BJ (cell line): ENCODE measurements at regions of chr3 and their contacts with region 1.

Region 1: DNA sequence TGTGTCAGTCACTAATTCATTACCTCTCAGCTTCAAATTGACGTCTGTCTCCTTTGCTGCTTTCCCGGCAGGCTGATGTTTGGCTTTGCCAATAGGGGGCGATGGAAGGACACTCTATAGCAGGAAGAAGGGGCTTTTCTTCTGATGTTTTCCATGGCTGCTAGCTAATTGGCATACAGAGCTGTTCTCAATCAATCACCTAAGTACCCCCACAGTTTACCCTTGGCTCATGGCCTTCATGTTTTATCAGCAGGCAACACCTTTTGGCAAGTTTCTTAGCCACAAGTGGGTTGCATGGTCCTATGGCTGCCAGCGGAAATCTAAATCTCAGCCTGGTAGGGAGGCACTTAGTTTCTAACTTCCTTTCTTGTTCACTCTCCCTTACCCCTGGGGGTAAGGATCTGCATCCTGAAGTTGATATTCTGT is 45.0 kb downstream of the ESYT3 start:
- DNase-seq: no peak
- H3K4me3 ChIP-seq: no peak overlapping the region
- H3K27me3 ChIP-seq: no peaks in the 10 kb centered on the region
- CTCF ChIP-seq: peak; percentile 91

Region 2: DNA sequence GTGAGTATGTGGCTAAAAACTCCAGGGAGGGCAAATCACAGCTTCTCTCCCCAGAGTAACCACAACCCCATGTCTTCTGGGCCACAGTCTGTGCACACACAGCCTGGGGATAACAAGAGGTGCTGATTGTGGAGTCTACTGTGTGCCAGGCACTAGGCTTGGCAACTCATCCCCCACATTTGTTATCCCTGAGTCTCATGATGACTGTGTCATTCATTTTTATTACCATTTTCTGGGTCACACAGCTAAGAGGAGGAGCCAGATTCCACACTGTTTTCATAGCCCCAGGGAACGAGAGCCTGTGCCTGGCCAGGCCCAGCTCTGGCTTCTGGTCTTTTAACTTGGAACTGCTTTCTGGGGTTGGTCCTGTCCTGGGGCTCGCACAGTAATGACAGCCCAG is 10.6 kb before region 1 on chr3:
- CTCF ChIA-PET with region 1: interaction called, 42 read pairs
- POLR2A ChIA-PET with region 1: no interaction called
- DNase-seq: peak; percentile 51
- H3K4me3 ChIP-seq: no peak overlapping the region
- H3K27me3 ChIP-seq: no peaks in the 10 kb centered on the region
- CTCF ChIP-seq: no peak

Region 3: DNA sequence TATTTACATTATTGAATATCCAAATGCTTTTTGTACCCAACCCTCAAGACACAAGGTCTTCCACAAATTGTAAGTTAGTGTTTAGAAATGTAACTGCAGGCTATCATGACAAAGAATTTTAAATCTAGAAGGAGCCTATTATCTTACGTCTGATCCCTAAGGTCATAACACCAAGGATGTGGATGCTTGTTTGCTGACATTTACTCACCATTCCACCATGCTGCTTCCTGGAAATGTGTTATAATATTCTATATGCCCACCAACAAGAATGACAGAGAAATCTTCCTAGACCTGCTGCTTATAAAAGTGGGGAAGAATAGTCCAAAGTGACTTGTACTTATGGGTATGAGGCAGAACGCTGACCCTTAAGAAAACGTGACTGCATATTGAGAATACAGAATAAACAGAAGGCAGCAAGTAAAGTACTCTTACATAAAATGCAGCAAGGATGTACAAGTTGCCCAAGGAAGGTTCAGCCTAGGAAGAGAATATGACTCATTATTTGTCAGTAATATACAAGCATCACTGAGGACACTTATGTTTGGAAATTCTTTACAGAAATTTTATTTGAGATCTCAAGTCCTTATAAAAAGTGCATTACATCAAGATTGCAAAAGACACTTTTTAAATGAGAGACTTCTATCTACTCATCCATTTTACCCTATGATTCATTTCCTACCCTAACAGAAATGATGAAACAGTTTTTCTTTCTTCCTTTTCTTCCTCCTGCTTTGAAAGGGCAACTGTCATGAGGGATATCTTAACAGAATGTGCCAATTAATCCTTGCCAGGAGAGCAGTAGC is 14.6 kb after region 1 on chr3:
- CTCF ChIA-PET with region 1: interaction called, 15 read pairs
- POLR2A ChIA-PET with region 1: no interaction called
- DNase-seq: peak; percentile 83
- H3K4me3 ChIP-seq: no peak overlapping the region
- H3K27me3 ChIP-seq: no peaks in the 10 kb centered on the region
- CTCF ChIP-seq: no peak

Region 4: DNA sequence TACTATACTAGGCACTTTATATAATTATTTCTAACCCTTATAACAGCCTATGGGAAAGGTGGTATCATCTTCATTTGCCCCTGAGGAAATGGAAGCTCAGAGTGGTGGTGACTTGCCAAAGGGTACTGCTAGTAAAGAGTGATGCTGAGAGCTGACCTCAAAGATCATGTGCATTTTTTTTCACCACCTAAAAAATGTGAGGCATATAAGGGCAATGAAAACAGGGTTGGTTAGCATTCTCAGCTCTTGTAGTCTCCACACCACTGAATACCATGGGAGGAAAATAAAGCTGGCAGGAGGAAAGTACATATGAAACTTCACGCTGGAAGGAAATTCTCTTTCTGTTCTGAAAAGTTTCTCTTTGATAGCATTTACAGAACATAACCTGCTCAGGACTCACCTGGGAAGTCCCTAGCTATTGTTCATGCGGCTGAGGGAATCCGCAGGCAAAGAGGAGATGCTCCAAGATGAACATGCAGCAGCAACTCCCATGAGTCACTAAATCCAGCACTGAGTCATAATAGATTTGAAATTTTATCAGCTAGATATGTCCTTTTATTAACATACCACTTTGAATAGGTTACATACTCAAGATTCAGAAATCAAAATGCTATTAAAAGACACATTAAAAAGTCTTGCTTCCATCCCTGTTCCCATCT is 146.4 kb after region 1 on chr3:
- CTCF ChIA-PET with region 1: no interaction called
- POLR2A ChIA-PET with region 1: no interaction called
- DNase-seq: no peak
- H3K4me3 ChIP-seq: no peak overlapping the region
- H3K27me3 ChIP-seq: no peaks in the 10 kb centered on the region
- CTCF ChIP-seq: no peak

Region 5: GRCh38 chr3:138686771-138687221 is 207.3 kb after region 1 on chr3:
- CTCF ChIA-PET with region 1: no interaction called
- POLR2A ChIA-PET with region 1: no interaction called
- DNase-seq: peak; percentile 71
- H3K4me3 ChIP-seq: no peak overlapping the region
- H3K27me3 ChIP-seq: no peaks in the 10 kb centered on the region
- CTCF ChIP-seq: no peak